CD4-positive, alpha-beta memory T cell (primary cell): ENCODE measurements at regions of chr1 and their contacts with region 1.

Region 1: GRCh38 chr1:198937231-198938031 is 298.6 kb downstream of the PTPRC start:
- DNase-seq: peak; percentile 47 to 64 (median 53)
- H3K4me3 ChIP-seq: peak overlapping the region; percentile 46 to 50
- H3K4me3 Mint-ChIP-seq: peak overlapping the region in 6 of 8 donors; percentile 82 to 91 (median 87)
- H3K27ac ChIP-seq: peak overlapping the region; percentile 51
- H3K27ac Mint-ChIP-seq: peak overlapping the region in 6 of 7 donors; percentile 68 to 92 (median 86)
- H3K4me1 ChIP-seq: peaks cover 48% of the 10 kb centered on the region
- H3K4me1 Mint-ChIP-seq: peaks cover 13 to 25% (median 18%) of the 10 kb centered on the region in 4 donors
- H3K27me3 ChIP-seq: no peaks in the 10 kb centered on the region
- H3K27me3 Mint-ChIP-seq: no peaks in the 10 kb centered on the region

Region 2: GRCh38 chr1:197902454-197903195 is 1034.8 kb before region 1 on chr1 and contains the start of gene C1orf53:
- CTCF ChIA-PET with region 1: no interaction called
- POLR2A ChIA-PET with region 1: no interaction called
- intact Hi-C with region 1: loop called (anchors 10 kb)
- DNase-seq: peak; percentile 71 to 85 (median 76)
- H3K4me3 ChIP-seq: peak within 1 kb of the TSS; percentile 26 to 75
- H3K4me3 Mint-ChIP-seq: peak within 1 kb of the TSS; percentile 87 to 93 (median 90)
- H3K27ac ChIP-seq: peak within 1 kb of the TSS; percentile 44
- H3K27ac Mint-ChIP-seq: peak within 1 kb of the TSS; percentile 30 to 85 (median 82)
- H3K4me1 ChIP-seq: peaks cover 15% of the 10 kb centered on the region
- H3K4me1 Mint-ChIP-seq: peaks cover 2 to 18% (median 12%) of the 10 kb centered on the region in 4 donors
- H3K27me3 ChIP-seq: peaks cover 43% of the 10 kb centered on the region
- H3K27me3 Mint-ChIP-seq: peaks cover 28 to 48% of the 10 kb centered on the region in 2 donors
- total RNA-seq, gene C1orf53: not detected

Region 3: DNA sequence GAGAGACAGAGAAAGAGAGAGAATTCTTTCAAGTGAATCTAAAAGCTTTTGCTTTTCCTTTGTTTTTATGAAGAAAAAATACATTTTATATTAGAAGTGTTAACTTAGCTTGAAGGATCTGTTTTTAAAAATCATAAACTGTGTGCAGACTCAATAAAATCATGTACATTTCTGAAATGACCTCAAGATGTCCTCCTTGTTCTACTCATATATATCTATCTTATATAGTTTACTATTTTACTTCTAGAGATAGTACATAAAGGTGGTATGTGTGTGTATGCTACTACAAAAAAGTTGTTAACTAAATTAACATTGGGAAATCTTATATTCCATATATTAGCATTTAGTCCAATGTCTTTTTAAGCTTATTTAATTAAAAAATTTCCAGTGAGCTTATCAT is 181.0 kb before region 1 on chr1:
- CTCF ChIA-PET with region 1: no interaction called
- POLR2A ChIA-PET with region 1: interaction called, 3 read pairs
- intact Hi-C with region 1: loop called (anchors 5 kb)
- DNase-seq: no peak
- H3K4me3 ChIP-seq: no peak overlapping the region
- H3K4me3 Mint-ChIP-seq: no peak overlapping the region
- H3K27ac ChIP-seq: no peak overlapping the region
- H3K27ac Mint-ChIP-seq: peak overlapping the region in 2 of 7 donors; percentile 59 to 70
- H3K4me1 ChIP-seq: peaks cover 11% of the 10 kb centered on the region
- H3K4me1 Mint-ChIP-seq: peaks cover 8 to 26% (median 20%) of the 10 kb centered on the region in 4 donors
- H3K27me3 ChIP-seq: no peaks in the 10 kb centered on the region
- H3K27me3 Mint-ChIP-seq: no peaks in the 10 kb centered on the region

Region 4: GRCh38 chr1:198919667-198920398 is 17.6 kb before region 1 on chr1:
- CTCF ChIA-PET with region 1: interaction called, 3 read pairs
- POLR2A ChIA-PET with region 1: interaction called, 29 read pairs
- intact Hi-C with region 1: loop called (anchors 1 kb)
- DNase-seq: peak in 2 of 5 donors; percentile 19 to 32
- H3K4me3 ChIP-seq: peak overlapping the region; percentile 2 to 4
- H3K4me3 Mint-ChIP-seq: peak overlapping the region; percentile 51 to 83 (median 80)
- H3K27ac ChIP-seq: peak overlapping the region; percentile 29
- H3K27ac Mint-ChIP-seq: peak overlapping the region in 6 of 7 donors; percentile 2 to 92 (median 80)
- H3K4me1 ChIP-seq: peaks cover 56% of the 10 kb centered on the region
- H3K4me1 Mint-ChIP-seq: peaks cover 33 to 51% (median 38%) of the 10 kb centered on the region in 4 donors
- H3K27me3 ChIP-seq: no peaks in the 10 kb centered on the region
- H3K27me3 Mint-ChIP-seq: no peaks in the 10 kb centered on the region

Region 5: GRCh38 chr1:198977909-198978308 is 40.5 kb after region 1 on chr1:
- CTCF ChIA-PET with region 1: no interaction called
- POLR2A ChIA-PET with region 1: no interaction called
- intact Hi-C with region 1: no loop called
- DNase-seq: no peak
- H3K4me3 ChIP-seq: no peak overlapping the region
- H3K4me3 Mint-ChIP-seq: no peak overlapping the region
- H3K27ac ChIP-seq: no peak overlapping the region
- H3K27ac Mint-ChIP-seq: no peak overlapping the region
- H3K4me1 ChIP-seq: no peaks in the 10 kb centered on the region
- H3K4me1 Mint-ChIP-seq: peaks cover 0 to 1% (median 0%) of the 10 kb centered on the region in 4 donors
- H3K27me3 ChIP-seq: no peaks in the 10 kb centered on the region
- H3K27me3 Mint-ChIP-seq: no peaks in the 10 kb centered on the region

Region 6: DNA sequence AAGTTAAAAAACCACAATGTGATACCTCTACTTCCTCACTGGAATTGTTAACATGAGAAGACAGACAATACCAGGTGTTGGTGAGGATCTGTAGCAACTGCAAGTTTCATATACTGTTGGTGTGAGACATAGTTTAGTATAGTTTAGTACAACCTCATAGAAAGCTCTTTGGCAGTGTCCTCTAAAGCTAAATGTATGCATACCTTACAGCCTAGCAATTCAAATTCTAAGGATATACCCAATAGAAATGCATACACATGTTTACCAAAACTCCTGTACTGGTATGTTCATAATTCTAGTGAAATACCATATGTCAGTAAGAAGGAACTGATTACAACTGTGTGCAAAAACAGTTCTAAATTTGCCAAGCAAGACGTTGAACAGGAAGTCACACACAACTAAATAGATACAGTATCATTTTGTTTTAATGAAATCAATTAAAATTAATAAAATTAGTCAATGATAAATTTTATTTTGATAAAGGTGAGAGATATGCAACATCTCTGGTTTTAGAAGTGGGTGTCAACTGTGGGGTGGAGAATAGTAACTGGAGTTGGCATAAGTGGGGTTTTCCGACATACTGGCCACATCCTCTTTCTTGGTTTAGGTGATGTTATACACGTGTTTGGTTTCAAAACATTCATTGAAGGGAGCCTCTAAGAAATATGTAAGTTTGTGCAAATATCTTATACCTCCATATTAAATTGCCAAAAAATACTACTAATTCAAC is 152.1 kb after region 1 on chr1:
- CTCF ChIA-PET with region 1: no interaction called
- POLR2A ChIA-PET with region 1: no interaction called
- intact Hi-C with region 1: loop called (anchors 10 kb)
- DNase-seq: peak; percentile 51 to 73 (median 64)
- H3K4me3 ChIP-seq: no peak overlapping the region
- H3K4me3 Mint-ChIP-seq: peak overlapping the region in 3 of 8 donors; percentile 40 to 67 (median 53)
- H3K27ac ChIP-seq: no peak overlapping the region
- H3K27ac Mint-ChIP-seq: peak overlapping the region in 1 of 7 donors; percentile 42
- H3K4me1 ChIP-seq: peaks cover 22% of the 10 kb centered on the region
- H3K4me1 Mint-ChIP-seq: peaks cover 13 to 19% (median 18%) of the 10 kb centered on the region in 4 donors
- H3K27me3 ChIP-seq: no peaks in the 10 kb centered on the region
- H3K27me3 Mint-ChIP-seq: no peaks in the 10 kb centered on the region